Mucosa of descending colon (tissue), 3 donors: ENCODE measurements at regions of chr16 and their contacts with region 1.

Region 1: DNA sequence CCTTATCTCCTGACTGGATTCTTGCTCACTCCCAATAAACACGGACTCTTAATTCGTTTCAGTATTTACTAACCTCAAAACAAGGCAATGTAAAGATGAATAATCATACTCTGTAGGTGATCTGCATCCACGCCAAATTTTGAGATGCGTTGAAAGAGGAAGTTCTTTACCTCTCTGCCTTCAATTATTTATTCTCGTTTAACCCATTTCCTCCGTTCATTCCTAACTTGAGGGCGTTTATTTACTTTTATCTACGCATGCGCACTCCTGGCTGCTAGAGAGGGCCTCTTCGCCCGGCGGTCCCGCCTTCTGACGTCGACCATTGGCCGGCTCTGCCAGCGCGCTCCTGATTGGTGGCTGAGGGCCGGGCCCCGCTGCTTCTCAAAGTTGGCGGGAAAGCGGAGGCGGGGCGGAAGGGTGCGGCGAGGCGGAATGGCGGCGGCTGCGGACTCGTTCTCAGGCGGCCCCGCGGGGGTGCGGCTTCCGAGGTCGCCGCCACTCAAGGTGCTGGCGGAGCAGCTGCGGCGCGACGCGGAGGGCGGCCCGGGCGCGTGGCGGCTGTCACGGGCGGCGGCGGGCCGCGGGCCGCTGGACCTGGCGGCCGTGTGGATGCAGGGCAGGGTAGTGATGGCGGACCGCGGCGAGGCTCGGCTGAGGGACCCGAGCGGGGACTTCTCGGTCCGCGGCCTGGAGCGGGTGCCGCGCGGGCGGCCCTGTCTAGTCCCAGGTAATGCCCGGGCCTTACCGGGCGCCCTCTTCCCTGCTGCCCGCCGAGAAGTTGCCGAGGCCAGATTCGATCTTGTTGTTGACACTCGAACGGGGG is at the start of gene RMI2:
- DNase-seq: peak; percentile 97 to 98 (median 97)
- ATAC-seq: peak; percentile 99
- H3K4me3 ChIP-seq: peak within 1 kb of the TSS; percentile 25
- H3K4me1 ChIP-seq: peaks cover 6% of the 10 kb centered on the region
- CTCF ChIP-seq: no peak
- total RNA-seq, gene RMI2: 2.1 to 12.1 (median 7.0) TPM

Region 2: DNA sequence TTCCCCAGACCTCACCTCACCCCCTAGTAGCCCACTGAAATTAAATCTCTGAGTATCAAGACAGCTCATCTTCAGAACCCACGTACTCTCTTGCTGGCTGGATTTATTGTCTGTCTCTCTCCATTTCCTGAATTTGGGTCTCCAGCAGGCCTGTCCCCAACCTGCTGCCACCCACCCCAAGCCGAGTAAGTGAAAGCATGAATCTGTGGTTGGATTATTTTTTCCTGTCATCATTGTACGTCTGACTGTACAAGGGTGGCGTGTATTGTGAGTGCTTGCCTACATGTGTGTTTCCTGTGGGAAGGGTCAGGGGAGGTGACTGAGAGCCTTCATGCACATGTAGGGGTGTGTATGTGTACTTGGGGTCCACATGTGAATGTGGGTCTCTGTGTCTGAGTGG is 81.5 kb before region 1 on chr16:
- intact Hi-C with region 1: loop called (anchors 10 kb)
- DNase-seq: peak in 1 of 3 donors; percentile 20
- ATAC-seq: peak; percentile 13
- H3K4me3 ChIP-seq: no peak overlapping the region
- H3K4me1 ChIP-seq: peaks cover 25% of the 10 kb centered on the region
- CTCF ChIP-seq: no peak